H1 (cell line): ENCODE measurements at regions of chr1 and their contacts with region 1.

Region 1: GRCh38 chr1:203593723-203594122 is 32.9 kb upstream of the ATP2B4 start:
- DNase-seq: peak in 1 of 2 experiments; percentile 63
- H3K4me3 ChIP-seq: no peak overlapping the region
- H3K27ac ChIP-seq: no peak overlapping the region
- H3K4me1 ChIP-seq: peaks cover 18 to 28% (median 23%) of the 10 kb centered on the region in 4 experiments
- H3K27me3 ChIP-seq: no peaks in the 10 kb centered on the region
- CTCF ChIP-seq: peak; percentile 59 to 63 (median 59)
- EP300 ChIP-seq: no peak
- POLR2A ChIP-seq: no peak
- RAD21 ChIP-seq: peak; percentile 55 to 66

Region 2: DNA sequence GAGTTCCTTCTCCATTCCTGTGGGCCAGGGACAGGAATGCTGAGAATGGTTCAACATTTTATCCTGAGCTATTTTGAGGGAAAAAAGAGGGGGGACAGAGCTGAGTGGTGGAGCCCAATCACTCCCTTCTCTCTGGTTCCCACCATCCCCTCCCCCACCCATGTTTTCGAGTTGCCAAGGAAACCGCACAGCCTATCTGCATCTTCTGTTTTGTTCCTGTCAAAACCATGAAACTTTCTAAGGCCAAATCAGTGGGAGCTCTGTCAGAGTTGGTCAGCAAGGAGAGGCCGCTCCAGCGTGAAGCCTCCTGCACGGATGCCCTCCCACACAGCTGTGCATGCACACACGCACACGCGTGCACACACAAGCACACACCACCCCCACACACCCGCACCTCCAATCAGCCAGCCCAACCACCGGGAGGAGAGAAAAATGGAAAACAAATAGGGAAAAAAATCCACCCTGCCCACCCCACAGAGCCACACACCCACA is 21.5 kb before region 1 on chr1:
- CTCF ChIA-PET with region 1: interaction called, 18 read pairs
- POLR2A ChIA-PET with region 1: interaction called, 3 read pairs
- DNase-seq: peak in 1 of 2 experiments; percentile 60
- H3K4me3 ChIP-seq: no peak overlapping the region
- H3K27ac ChIP-seq: 0 out of 2 replicates have a peak overlapping the region, but pooled peaks have one; percentile 18
- H3K4me1 ChIP-seq: peaks cover 0 to 9% (median 4%) of the 10 kb centered on the region in 4 experiments; a peak in 6 of 7 replicates
- H3K27me3 ChIP-seq: no peaks in the 10 kb centered on the region
- CTCF ChIP-seq: no peak
- EP300 ChIP-seq: peak in 1 of 2 experiments; percentile 18; a peak in 1 of 3 replicates
- POLR2A ChIP-seq: no peak
- RAD21 ChIP-seq: no peak

Region 3: DNA sequence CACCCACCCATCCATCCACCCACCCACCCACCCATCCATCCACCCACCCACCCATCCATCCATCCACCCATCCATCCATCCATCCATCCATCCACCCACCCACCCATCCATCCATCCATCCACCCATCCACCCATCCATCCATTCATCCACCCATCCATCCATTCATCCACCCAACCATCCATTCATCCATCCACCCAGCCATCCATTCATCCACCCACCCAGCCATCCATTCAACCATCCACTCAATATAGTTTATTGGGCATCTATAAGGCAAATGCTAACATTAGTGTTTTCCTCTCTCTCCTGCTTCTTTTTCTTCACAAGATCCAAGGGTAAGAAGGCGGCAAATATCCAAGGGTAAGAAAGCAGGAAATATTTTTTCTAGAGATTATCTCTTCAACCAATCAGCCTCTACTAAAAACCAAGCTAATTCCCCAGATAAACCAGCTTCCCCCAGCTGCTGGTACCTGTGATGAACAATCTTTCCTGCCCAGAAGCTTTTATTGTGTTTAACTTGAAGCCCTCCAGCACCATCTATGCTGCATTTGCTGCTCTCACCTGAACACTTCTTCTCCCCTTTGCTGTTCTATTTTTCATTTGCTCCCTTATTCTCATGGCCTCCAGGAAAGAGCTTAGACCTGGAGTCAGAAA is 10.3 kb after region 1 on chr1:
- CTCF ChIA-PET with region 1: interaction called, 33 read pairs
- POLR2A ChIA-PET with region 1: interaction called, 4 read pairs
- DNase-seq: no peak
- H3K4me3 ChIP-seq: no peak overlapping the region
- H3K27ac ChIP-seq: no peak overlapping the region
- H3K4me1 ChIP-seq: no peaks in the 10 kb centered on the region; a peak in 1 of 7 replicates
- H3K27me3 ChIP-seq: no peaks in the 10 kb centered on the region
- CTCF ChIP-seq: no peak
- EP300 ChIP-seq: no peak
- POLR2A ChIP-seq: no peak
- RAD21 ChIP-seq: no peak

Region 4: DNA sequence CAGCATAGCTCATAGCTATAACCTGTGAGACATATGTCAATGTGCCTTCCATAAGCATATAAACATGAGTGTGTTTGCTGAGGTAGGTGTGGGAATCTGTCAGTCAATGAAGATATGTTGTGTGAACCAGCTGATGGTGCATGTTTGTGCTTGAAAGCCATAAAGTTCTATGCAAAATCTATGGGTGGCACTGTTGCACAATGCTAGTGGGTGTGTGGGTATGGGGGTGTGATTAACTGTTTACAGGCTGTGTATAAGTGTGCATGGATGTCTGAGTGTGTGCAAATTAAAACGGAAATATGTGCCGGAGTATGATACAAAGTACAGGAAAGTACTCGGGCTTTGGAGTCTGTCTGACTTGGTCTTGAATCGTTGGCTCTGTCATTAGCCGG is 31.9 kb after region 1 on chr1:
- CTCF ChIA-PET with region 1: interaction called, 13 read pairs
- POLR2A ChIA-PET with region 1: interaction called, 8 read pairs
- DNase-seq: no peak
- H3K4me3 ChIP-seq: no peak overlapping the region
- H3K27ac ChIP-seq: no peak overlapping the region
- H3K4me1 ChIP-seq: peaks cover 8 to 25% (median 17%) of the 10 kb centered on the region in 4 experiments
- H3K27me3 ChIP-seq: peaks cover 3 to 23% (median 9%) of the 10 kb centered on the region in 4 experiments
- CTCF ChIP-seq: no peak
- EP300 ChIP-seq: no peak
- POLR2A ChIP-seq: no peak
- RAD21 ChIP-seq: peak; percentile 25 to 27; a peak in 3 of 4 replicates